SK-N-SH (cell line): ENCODE measurements at regions of chr9 and their contacts with region 1.

Region 1: GRCh38 chr9:98848450-98849149 is 41.1 kb downstream of the GALNT12 start:
- DNase-seq: peak; percentile 82
- H3K4me3 ChIP-seq: no peak overlapping the region
- H3K27ac ChIP-seq: peak overlapping the region in 1 of 2 experiments; percentile 34; a peak in 1 of 4 replicates
- H3K4me1 ChIP-seq: peaks cover 0 to 4% of the 10 kb centered on the region in 2 experiments; a peak in 1 of 4 replicates
- H3K27me3 ChIP-seq: no peaks in the 10 kb centered on the region
- CTCF ChIP-seq: peak; percentile 95
- EP300 ChIP-seq: peak in 1 of 2 experiments; percentile 32; a peak in 1 of 4 replicates
- RAD21 ChIP-seq: peak; percentile 93

Region 2: GRCh38 chr9:98594546-98595160 is 253.9 kb before region 1 on chr9:
- CTCF ChIA-PET with region 1: no interaction called
- POLR2A ChIA-PET with region 1: no interaction called
- DNase-seq: no peak
- H3K4me3 ChIP-seq: no peak overlapping the region
- H3K27ac ChIP-seq: no peak overlapping the region
- H3K4me1 ChIP-seq: no peaks in the 10 kb centered on the region
- H3K27me3 ChIP-seq: no peaks in the 10 kb centered on the region; the same call in 1 of the 2 replicates
- CTCF ChIP-seq: no peak
- EP300 ChIP-seq: no peak
- RAD21 ChIP-seq: no peak

Region 3: GRCh38 chr9:98807070-98807810 is 41.4 kb before region 1 on chr9 and contains the start of gene GALNT12:
- CTCF ChIA-PET with region 1: interaction called, 10 read pairs
- POLR2A ChIA-PET with region 1: no interaction called
- DNase-seq: peak; percentile 86
- H3K4me3 ChIP-seq: peak within 1 kb of the TSS; percentile 62 to 71
- H3K27ac ChIP-seq: no peak within 1 kb of the TSS
- H3K4me1 ChIP-seq: peaks cover 0 to 19% of the 10 kb centered on the region in 2 experiments; a peak in 1 of 4 replicates
- H3K27me3 ChIP-seq: peaks cover 20% of the 10 kb centered on the region; the same call in 1 of the 2 replicates
- CTCF ChIP-seq: no peak
- EP300 ChIP-seq: no peak
- RAD21 ChIP-seq: no peak
- polyA plus RNA-seq, gene GALNT12: 7.4 TPM in 2 replicates

Region 4: DNA sequence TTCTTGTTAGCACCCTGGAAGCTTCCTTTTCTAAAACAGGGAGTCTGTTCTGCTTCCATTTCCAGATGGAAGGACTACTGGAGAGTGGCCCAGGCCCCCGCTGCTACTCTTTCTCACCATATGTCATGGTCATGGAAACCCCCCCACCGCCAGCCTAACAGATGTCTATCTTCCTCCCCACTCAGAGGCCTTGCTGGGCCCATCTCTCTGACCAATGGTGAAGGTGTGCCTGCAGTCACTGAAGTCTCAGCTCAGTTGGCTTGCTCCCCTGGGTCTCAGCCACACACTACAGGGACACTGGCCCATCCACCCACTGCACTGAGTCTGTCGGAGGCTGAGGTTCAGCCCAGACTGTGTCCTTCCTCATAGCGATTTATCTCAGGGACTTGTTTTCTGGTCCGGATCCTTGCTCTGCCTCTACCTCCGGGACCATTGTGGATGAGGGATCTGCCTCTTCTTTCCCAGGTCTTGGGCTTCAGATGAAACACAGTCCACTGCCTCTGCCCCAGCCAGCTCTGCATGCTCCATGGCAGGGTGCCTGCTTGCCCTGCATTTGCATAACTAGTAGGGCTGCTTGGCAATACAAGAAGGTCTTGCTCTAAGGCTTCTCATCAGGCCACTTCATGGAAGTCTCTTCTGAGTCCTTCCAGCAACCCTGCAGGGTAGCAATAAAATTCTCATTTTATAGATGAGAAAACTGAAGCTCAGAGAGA is 10.3 kb before region 1 on chr9:
- CTCF ChIA-PET with region 1: interaction called, 21 read pairs
- POLR2A ChIA-PET with region 1: no interaction called
- DNase-seq: no peak
- H3K4me3 ChIP-seq: no peak overlapping the region
- H3K27ac ChIP-seq: no peak overlapping the region
- H3K4me1 ChIP-seq: no peaks in the 10 kb centered on the region
- H3K27me3 ChIP-seq: no peaks in the 10 kb centered on the region
- CTCF ChIP-seq: no peak
- EP300 ChIP-seq: no peak
- RAD21 ChIP-seq: no peak

Region 5: GRCh38 chr9:98860871-98861293 is 12.3 kb after region 1 on chr9:
- CTCF ChIA-PET with region 1: interaction called, 19 read pairs
- POLR2A ChIA-PET with region 1: interaction called, 3 read pairs
- DNase-seq: peak; percentile 49
- H3K4me3 ChIP-seq: no peak overlapping the region
- H3K27ac ChIP-seq: no peak overlapping the region
- H3K4me1 ChIP-seq: peaks cover 0 to 3% of the 10 kb centered on the region in 2 experiments; a peak in 2 of 4 replicates
- H3K27me3 ChIP-seq: no peaks in the 10 kb centered on the region
- CTCF ChIP-seq: peak; percentile 74
- EP300 ChIP-seq: no peak
- RAD21 ChIP-seq: peak; percentile 77

Region 6: GRCh38 chr9:98974994-98975712 is 126.6 kb after region 1 on chr9:
- CTCF ChIA-PET with region 1: interaction called, 37 read pairs
- POLR2A ChIA-PET with region 1: no interaction called
- DNase-seq: peak; percentile 89
- H3K4me3 ChIP-seq: peak overlapping the region; percentile 31 to 32
- H3K27ac ChIP-seq: no peak overlapping the region
- H3K4me1 ChIP-seq: peaks cover 5 to 9% of the 10 kb centered on the region in 2 experiments; a peak in 1 of 4 replicates
- H3K27me3 ChIP-seq: no peaks in the 10 kb centered on the region
- CTCF ChIP-seq: peak; percentile 94
- EP300 ChIP-seq: no peak
- RAD21 ChIP-seq: peak; percentile 80

Region 7: DNA sequence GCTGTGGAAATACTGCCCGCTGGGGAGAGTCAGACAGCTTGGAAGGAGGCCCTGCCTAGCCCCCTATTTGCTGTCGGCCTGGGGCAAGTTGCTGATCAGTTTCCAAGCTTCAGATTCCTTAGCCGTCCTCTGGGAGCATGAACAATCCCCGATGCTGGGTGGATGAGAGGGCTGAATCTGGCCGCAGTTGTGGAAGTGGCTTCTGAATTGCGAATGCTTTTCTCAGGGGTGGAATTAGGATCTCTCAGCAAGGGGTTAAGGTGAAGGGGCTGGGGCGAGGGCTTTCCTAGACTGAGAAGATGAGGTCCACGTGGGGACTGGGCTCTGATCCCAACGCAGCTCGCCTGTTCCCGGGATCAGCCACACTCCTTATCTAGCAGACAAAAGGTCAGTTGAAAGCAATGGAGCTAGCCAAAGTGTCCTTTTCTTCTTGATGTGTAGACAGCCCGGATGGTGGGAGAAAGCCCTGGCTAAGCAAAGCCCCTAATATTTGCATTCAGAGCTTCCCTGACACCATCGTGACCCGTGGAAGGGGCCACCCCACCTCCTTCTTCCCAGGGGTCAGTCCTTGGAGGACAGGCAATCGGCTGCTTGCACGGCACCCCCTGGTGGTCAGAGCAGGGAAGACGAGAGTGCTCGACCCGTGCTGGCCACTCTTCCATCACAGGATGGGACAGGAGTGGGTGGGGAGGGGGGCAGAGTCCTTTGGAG is 150.0 kb after region 1 on chr9:
- CTCF ChIA-PET with region 1: interaction called, 88 read pairs
- POLR2A ChIA-PET with region 1: no interaction called
- DNase-seq: peak; percentile 87
- H3K4me3 ChIP-seq: peak overlapping the region in 1 of 2 experiments; percentile 27; a peak in 1 of 4 replicates
- H3K27ac ChIP-seq: no peak overlapping the region
- H3K4me1 ChIP-seq: peaks cover 0 to 6% of the 10 kb centered on the region in 2 experiments; a peak in 1 of 4 replicates
- H3K27me3 ChIP-seq: no peaks in the 10 kb centered on the region
- CTCF ChIP-seq: peak; percentile 86
- EP300 ChIP-seq: no peak
- RAD21 ChIP-seq: peak; percentile 73

Region 8: DNA sequence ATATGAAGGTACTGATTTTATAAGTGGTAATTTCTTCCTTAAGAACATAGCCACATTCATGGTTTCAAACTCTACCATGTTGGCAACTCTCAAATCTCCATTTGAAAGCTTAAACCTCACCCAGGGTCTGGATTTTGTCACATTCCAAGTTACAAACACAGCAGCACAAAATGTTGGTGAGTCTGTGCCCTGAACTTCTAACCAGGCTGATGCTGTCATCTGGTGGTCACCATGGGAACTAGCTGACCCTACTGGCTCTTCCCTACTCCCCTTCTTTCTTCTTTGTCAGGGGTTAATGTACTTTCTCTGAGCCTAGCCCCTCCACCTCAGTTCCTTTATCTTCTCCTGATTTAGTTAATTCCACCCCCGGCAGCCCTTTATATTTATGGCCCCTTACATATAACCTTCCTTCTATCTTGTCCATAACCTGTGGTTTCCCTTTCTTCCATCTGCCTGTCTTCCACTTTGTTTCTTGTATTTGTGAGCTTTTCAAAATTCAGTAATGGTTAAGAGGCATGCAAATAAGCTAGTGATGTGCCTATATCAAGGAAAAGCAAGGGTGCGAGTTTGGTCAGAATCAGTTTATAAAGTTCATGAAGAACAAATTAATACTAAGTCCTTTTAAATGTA is 292.2 kb after region 1 on chr9:
- CTCF ChIA-PET with region 1: interaction called, 89 read pairs
- POLR2A ChIA-PET with region 1: no interaction called
- DNase-seq: peak; percentile 46
- H3K4me3 ChIP-seq: no peak overlapping the region
- H3K27ac ChIP-seq: no peak overlapping the region
- H3K4me1 ChIP-seq: no peaks in the 10 kb centered on the region; a peak in 1 of 4 replicates
- H3K27me3 ChIP-seq: no peaks in the 10 kb centered on the region
- CTCF ChIP-seq: peak; percentile 88
- EP300 ChIP-seq: no peak
- RAD21 ChIP-seq: peak; percentile 90